Caco-2 (cell line): ENCODE measurements at regions of chr6 and their contacts with region 1.

Region 1: DNA sequence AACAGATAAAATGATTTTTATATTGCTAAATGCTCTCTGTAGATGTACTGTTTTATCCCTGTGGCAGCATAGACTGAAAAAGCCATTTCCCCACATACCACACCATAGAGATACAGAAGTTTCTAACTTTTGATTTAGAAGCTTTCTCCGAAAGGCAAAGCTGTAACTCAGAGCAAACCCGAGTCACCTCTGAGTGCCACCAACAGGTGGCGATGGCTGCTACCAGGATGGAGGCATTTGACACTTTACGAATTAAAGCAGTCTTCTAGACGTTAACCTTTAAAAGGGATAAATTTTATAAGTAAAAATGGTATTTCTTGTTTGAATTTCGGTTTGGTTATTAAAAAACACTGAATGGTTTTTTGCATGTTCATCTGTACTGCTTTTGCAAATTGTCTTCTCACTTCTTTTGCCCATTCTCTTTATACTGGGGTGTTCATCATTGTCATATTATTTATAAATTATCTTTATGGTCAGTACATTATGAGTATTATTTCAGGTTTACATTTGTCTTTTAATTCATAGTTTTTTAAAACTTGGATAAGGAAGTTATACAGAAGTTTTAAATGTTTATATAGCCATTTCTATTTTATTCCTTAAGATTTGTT is 201.0 kb upstream of the CEP162 start:
- DNase-seq: peak; percentile 46 to 53
- H3K4me3 ChIP-seq: no peak overlapping the region
- H3K4me3 Mint-ChIP-seq: no peak overlapping the region
- H3K27ac Mint-ChIP-seq: no peak overlapping the region
- H3K4me1 ChIP-seq: no peaks in the 10 kb centered on the region
- H3K4me1 Mint-ChIP-seq: no peaks in the 10 kb centered on the region
- H3K27me3 ChIP-seq: no peaks in the 10 kb centered on the region
- H3K27me3 Mint-ChIP-seq: no peaks in the 10 kb centered on the region
- CTCF ChIP-seq: peak; percentile 71 to 85

Region 2: GRCh38 chr6:84332139-84333034 is 96.0 kb before region 1 on chr6:
- CTCF ChIA-PET with region 1: no interaction called
- POLR2A ChIA-PET with region 1: no interaction called
- intact Hi-C with region 1: no loop called
- DNase-seq: no peak
- H3K4me3 ChIP-seq: no peak overlapping the region
- H3K4me3 Mint-ChIP-seq: no peak overlapping the region
- H3K27ac Mint-ChIP-seq: no peak overlapping the region
- H3K4me1 ChIP-seq: no peaks in the 10 kb centered on the region
- H3K4me1 Mint-ChIP-seq: no peaks in the 10 kb centered on the region
- H3K27me3 ChIP-seq: no peaks in the 10 kb centered on the region
- H3K27me3 Mint-ChIP-seq: no peaks in the 10 kb centered on the region
- CTCF ChIP-seq: no peak

Region 3: GRCh38 chr6:84536914-84537638 is 108.7 kb after region 1 on chr6:
- CTCF ChIA-PET with region 1: no interaction called
- POLR2A ChIA-PET with region 1: no interaction called
- intact Hi-C with region 1: loop called (anchors 1 kb)
- DNase-seq: no peak
- H3K4me3 ChIP-seq: no peak overlapping the region
- H3K4me3 Mint-ChIP-seq: no peak overlapping the region
- H3K27ac Mint-ChIP-seq: no peak overlapping the region
- H3K4me1 ChIP-seq: no peaks in the 10 kb centered on the region
- H3K4me1 Mint-ChIP-seq: peaks cover 6% of the 10 kb centered on the region
- H3K27me3 ChIP-seq: no peaks in the 10 kb centered on the region
- H3K27me3 Mint-ChIP-seq: no peaks in the 10 kb centered on the region
- CTCF ChIP-seq: no peak

Region 4: DNA sequence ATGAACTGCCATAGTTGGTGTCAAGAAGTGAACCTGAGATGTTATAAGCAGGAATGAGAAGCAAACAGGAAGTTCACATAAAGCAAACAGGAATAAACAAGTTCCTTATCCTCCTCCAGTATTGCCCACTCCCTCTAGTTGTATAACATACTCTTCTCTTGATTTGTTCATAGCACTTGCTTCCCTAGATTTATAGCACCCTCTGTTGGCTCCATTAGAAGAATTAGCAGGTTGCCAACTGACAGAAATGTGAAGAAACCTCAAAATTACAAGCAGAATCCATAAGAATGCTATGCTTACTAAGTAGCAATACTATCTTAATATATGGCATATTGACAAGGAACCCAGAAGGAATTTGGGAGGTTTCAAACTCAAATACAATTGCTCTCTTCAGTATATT is 140.6 kb after region 1 on chr6:
- CTCF ChIA-PET with region 1: interaction called, 3 read pairs
- POLR2A ChIA-PET with region 1: no interaction called
- intact Hi-C with region 1: loop called (anchors 1 kb)
- DNase-seq: peak in 1 of 2 experiments; percentile 17
- H3K4me3 ChIP-seq: no peak overlapping the region
- H3K4me3 Mint-ChIP-seq: no peak overlapping the region
- H3K27ac Mint-ChIP-seq: no peak overlapping the region
- H3K4me1 ChIP-seq: no peaks in the 10 kb centered on the region
- H3K4me1 Mint-ChIP-seq: no peaks in the 10 kb centered on the region
- H3K27me3 ChIP-seq: no peaks in the 10 kb centered on the region
- H3K27me3 Mint-ChIP-seq: no peaks in the 10 kb centered on the region
- CTCF ChIP-seq: peak; percentile 22 to 37

Region 5: DNA sequence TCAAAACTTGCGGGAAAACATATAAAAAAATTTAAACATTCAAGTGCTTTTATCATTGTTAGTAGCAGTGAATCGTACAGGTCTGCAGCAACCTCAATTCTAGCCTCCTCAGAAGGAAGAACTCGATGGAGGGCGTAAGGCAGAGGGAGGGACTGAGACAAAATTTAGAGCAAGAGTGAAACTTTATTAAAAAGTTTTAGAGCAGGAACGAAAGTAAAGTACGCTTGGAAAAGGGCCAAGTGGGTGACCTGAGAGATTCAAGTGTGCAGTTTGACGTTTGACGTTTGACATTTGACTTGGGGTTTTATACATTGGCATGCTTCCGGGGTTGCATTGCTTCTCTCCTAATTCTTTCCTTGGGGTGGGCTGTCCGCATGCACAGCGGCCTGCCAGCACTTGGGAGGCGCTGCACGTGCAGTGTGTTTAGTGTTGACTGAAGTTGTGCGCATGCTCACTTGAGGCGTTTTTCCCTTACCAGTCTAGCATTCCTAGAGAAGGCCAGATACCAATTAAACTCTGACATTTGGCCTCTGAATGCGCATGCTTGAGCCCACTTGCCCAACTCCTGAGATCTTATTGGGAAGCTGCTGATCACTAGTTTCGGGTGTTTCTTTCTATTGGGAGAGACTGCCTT is 253.4 kb after region 1 on chr6:
- CTCF ChIA-PET with region 1: no interaction called
- POLR2A ChIA-PET with region 1: no interaction called
- intact Hi-C with region 1: no loop called
- DNase-seq: no peak
- H3K4me3 ChIP-seq: no peak overlapping the region
- H3K4me3 Mint-ChIP-seq: no peak overlapping the region
- H3K27ac Mint-ChIP-seq: no peak overlapping the region
- H3K4me1 ChIP-seq: no peaks in the 10 kb centered on the region
- H3K4me1 Mint-ChIP-seq: no peaks in the 10 kb centered on the region
- H3K27me3 ChIP-seq: no peaks in the 10 kb centered on the region
- H3K27me3 Mint-ChIP-seq: peaks cover under 1% of the 10 kb centered on the region
- CTCF ChIP-seq: no peak

Region 6: DNA sequence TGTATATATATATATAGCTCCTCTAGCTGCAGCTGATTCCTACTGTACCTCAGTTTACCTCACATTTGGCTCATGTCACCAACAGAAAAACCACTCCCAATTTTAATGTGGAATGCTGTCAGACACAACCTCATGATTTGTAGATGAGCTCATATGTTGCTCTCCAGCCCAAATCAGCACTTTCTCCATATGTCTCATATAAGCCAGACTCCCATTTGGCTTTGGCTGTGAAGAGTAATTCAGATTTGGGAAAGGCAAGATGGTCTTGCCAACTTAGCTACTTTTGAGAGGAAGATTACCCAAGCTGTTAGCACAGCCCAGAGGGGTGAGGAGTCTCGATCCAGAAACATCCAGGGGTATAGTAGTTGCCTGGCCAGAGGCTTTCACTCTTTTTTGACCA is 679.3 kb after region 1 on chr6:
- CTCF ChIA-PET with region 1: no interaction called
- POLR2A ChIA-PET with region 1: no interaction called
- intact Hi-C with region 1: no loop called
- DNase-seq: no peak
- H3K4me3 ChIP-seq: no peak overlapping the region
- H3K4me3 Mint-ChIP-seq: no peak overlapping the region
- H3K27ac Mint-ChIP-seq: no peak overlapping the region
- H3K4me1 ChIP-seq: no peaks in the 10 kb centered on the region
- H3K4me1 Mint-ChIP-seq: no peaks in the 10 kb centered on the region
- H3K27me3 ChIP-seq: no peaks in the 10 kb centered on the region
- H3K27me3 Mint-ChIP-seq: peaks cover 12% of the 10 kb centered on the region
- CTCF ChIP-seq: no peak

Region 7: DNA sequence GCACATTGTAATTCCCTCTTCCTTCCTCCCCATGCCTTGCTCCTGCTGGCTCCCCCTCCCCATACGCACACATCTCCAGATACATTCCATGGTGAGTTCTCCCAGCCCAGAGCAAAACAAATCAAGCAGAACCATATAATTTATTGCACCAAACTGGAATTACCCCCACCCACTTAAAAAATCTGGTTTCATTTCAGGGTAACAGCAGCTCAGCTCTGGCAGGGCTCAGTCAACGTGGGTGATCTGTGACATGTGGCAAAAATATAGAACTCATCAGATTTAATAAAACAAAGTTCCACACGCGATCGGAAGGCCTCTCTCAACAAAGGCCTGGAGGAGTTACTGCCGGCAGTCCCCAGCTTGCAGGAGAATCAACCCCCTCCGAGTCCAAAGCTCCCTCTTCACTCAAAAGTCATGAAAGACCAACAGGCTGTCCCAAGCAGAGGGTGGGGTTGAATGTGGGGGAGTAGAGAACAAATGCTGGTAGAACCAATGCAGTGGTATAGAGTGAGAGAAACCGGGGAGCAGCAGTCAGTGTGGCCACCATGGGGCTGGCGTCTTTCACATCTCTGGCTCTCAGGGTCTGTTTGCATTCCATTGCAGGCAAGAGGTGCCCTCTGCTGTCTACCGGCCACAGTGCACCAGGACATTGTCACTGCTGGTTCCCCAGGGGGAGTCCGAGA is 698.2 kb after region 1 on chr6:
- CTCF ChIA-PET with region 1: no interaction called
- POLR2A ChIA-PET with region 1: no interaction called
- intact Hi-C with region 1: loop called (anchors 10 kb)
- DNase-seq: peak; percentile 60 to 63
- H3K4me3 ChIP-seq: no peak overlapping the region
- H3K4me3 Mint-ChIP-seq: no peak overlapping the region
- H3K27ac Mint-ChIP-seq: no peak overlapping the region
- H3K4me1 ChIP-seq: no peaks in the 10 kb centered on the region
- H3K4me1 Mint-ChIP-seq: no peaks in the 10 kb centered on the region
- H3K27me3 ChIP-seq: no peaks in the 10 kb centered on the region
- H3K27me3 Mint-ChIP-seq: peaks cover 10% of the 10 kb centered on the region
- CTCF ChIP-seq: peak; percentile 57 to 77